ENCODE measurements at regions of chr4 and their contacts with region 1.

Region 1: GRCh38 chr4:153432968-153433753 is 33.0 kb upstream of the TMEM131L start:
- DNase-seq: peak; percentile 69
- H3K4me3 ChIP-seq: no peak overlapping the region
- H3K27ac ChIP-seq: no peak overlapping the region
- H3K4me1 ChIP-seq: no peaks in the 10 kb centered on the region
- H3K27me3 ChIP-seq: no peaks in the 10 kb centered on the region
- CTCF ChIP-seq: peak; percentile 35 to 89 (median 74)
- POLR2A ChIP-seq: no peak

Region 2: DNA sequence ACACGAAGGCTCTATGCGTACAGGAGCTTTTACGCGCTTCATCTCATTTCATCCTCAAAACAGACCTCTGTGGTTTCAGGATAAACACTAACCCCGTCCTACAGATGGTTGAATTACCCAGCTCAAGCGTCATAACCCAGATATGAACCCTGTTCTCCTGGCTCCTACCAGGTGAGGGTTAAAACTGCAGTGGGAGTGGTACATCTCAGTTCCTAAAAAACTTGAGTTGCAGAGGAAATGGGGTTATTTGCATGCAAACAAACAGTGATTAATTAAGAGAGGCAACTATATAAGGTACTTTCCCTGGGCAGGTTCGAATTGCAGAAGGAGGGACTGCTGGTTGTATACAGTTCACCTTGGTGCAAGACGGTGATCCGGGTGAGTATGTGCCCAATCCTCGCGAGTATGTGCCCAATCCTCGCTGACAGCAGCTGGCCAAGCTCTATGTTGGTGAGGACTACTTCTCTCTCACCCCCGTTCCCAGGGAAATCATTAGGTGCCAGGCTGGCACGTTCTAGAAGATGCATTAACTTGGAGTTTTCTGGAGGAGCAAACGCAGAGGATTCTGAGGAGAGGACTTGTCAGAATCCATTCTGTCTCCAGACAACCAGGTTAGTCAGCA is 424.5 kb before region 1 on chr4:
- intact Hi-C with region 1: no loop called
- DNase-seq: no peak
- H3K4me3 ChIP-seq: no peak overlapping the region
- H3K27ac ChIP-seq: no peak overlapping the region
- H3K4me1 ChIP-seq: no peaks in the 10 kb centered on the region
- H3K27me3 ChIP-seq: no peaks in the 10 kb centered on the region
- CTCF ChIP-seq: no peak
- POLR2A ChIP-seq: no peak

Region 3: GRCh38 chr4:153573881-153574802 is 141.0 kb after region 1 on chr4:
- intact Hi-C with region 1: loop called (anchors 10 kb)
- DNase-seq: peak; percentile 58
- H3K4me3 ChIP-seq: no peak overlapping the region
- H3K27ac ChIP-seq: no peak overlapping the region
- H3K4me1 ChIP-seq: no peaks in the 10 kb centered on the region
- H3K27me3 ChIP-seq: no peaks in the 10 kb centered on the region
- CTCF ChIP-seq: peak in 3 of 4 experiments; percentile 61 to 71 (median 69)
- POLR2A ChIP-seq: no peak

Measured in prostate gland (tissue), 2 donors.